ENCODE measurements at regions of chr1 and their contacts with region 1.

Region 1: GRCh38 chr1:109984456-109985275 is at the start of gene AHCYL1:
- DNase-seq: peak; percentile 100
- CTCF ChIP-seq: peak; percentile 96

Region 2: GRCh38 chr1:109548321-109549267 is 436.1 kb before region 1 on chr1 and contains the start of gene GNAI3:
- in situ Hi-C with region 1: loop called (anchors 10 kb)
- DNase-seq: peak; percentile 94
- CTCF ChIP-seq: no peak

Region 3: DNA sequence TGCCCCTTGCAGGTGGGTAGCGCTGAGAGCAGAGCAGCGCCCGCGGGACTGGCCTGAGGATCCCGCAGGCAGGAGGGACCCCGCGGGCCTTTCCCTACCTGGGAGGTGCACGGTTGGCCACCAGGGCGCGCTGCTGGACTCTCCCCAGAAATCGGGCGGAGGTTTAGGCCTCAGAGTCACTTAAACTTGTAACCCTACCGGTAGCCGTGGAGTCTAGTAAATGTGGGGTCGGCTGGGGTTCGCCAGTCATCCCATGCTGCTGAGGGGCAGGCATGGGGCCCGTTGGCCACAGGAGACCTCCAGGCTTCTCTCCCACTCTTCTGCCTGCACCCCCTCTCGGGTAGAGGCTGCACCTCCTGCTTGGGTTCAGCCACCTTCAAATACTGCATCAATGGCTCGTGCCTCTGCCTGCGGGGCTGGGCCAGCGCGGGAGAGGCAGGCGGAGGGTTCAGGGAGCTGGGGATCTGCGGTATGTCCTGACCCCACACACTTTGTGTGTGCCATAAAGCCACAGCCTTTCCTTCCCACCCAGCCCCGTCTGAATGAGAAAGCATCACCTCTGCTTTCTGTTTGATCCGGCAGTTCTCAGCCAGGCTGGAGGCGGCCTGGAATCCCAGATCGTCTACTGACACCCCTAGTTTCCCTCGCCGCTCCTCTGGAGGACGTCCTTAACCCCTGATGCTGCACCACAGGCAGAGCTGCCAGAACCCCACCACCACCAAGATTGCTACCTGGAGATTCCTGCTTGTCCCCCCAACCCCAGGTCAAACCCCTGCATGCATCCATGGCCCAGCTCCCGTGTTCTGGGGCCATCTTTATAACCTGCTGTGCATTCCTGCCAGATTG is 341.1 kb before region 1 on chr1:
- in situ Hi-C with region 1: loop called (anchors 5 kb)
- DNase-seq: peak; percentile 90
- CTCF ChIP-seq: peak; percentile 90

Region 4: GRCh38 chr1:109773146-109773899 is 211.3 kb before region 1 on chr1:
- in situ Hi-C with region 1: loop called (anchors 5 kb)
- DNase-seq: peak; percentile 88
- CTCF ChIP-seq: peak; percentile 81

Region 5: DNA sequence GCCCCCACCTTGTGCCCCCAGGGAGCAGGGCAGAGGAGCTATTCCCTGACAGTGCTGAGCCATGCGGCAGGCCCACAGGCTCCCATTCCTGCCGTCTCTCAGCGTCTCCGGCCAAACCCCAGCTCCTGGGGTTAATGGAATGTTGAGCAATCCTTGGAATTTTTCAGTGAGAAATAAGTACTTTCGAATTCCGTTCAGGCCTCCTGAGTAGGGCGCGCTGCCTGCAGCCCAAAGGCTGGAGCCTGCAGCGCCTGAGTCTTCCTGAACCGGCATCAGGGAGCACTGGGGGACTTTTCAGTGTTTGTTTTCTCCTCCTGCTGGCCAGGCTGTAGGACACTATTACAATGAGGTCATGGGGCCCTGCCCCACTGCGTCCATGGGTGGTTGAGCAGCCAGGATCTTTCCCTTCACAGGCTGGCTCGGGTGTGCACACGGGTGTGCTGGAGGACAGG is 107.3 kb before region 1 on chr1:
- in situ Hi-C with region 1: no loop called
- DNase-seq: no peak
- CTCF ChIP-seq: no peak

Measured in GM13976 (cell line).